AG04449 (cell line): ENCODE measurements at regions of chr2 and their contacts with region 1.

Region 1: GRCh38 chr2:75608684-75609333 is 37.8 kb upstream of the MRPL19 start:
- DNase-seq: no peak
- H3K4me3 ChIP-seq: peak overlapping the region; percentile 40
- CTCF ChIP-seq: peak; percentile 95

Region 2: DNA sequence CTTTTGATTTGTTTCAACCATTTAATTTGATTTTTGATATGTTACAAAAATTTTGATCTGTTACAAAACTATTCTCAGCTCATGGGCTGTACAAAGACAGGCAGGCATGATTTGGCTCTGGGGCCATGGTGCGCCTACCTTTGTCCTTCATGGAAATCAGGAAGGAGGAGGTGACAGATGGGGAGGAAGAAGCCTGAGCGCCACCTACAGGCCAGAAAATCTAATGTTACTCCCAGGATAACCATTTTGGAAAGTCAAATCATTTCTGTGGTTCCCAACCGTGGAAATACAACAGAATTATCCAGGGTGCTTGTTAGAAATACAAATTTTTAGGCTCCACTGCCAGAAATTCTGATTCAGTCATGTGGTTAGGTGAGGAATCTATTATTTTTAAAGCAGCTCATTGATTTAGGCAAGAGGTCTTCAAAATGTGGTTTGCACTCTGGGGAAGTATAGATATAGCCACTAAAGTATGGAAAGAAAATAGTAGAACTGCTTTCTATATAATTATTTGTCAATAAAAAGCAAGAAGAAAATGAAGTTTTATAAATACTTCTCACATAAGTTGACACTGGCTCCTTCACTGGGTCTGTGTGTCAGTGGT is 142.0 kb before region 1 on chr2:
- CTCF ChIA-PET with region 1: interaction called, 379 read pairs
- POLR2A ChIA-PET with region 1: no interaction called
- DNase-seq: no peak
- H3K4me3 ChIP-seq: no peak overlapping the region
- CTCF ChIP-seq: peak; percentile 44

Region 3: DNA sequence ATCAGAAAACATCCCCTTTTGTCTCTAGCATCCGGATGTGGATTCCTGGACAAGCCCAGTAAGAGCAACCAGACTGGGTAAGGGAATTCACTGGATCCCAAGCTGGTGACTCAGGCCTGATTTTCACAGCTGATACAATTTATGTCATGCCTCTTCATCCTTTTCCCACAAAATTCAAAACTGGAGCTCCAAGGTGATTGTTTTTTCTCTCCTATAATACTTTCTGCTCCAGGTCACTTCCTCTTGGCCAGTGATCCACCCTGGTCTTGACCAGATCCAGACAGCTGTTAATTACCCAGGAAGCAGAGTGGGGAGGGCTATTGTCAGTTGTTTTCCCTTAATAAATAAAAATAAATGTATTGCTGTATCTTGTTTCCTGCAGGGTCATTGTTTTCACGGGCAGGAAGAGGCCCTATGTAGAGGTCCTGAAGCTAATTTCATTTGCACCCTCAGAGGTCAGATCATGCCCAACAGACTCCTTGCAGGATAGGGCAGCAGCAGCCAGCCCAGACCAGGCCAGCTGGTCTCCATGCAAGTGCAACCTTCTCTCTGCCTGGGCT is 105.7 kb before region 1 on chr2:
- CTCF ChIA-PET with region 1: interaction called, 38 read pairs
- POLR2A ChIA-PET with region 1: no interaction called
- DNase-seq: peak; percentile 66
- H3K4me3 ChIP-seq: no peak overlapping the region
- CTCF ChIP-seq: no peak

Region 4: GRCh38 chr2:75548036-75548573 is 60.7 kb before region 1 on chr2:
- CTCF ChIA-PET with region 1: interaction called, 51 read pairs
- POLR2A ChIA-PET with region 1: interaction called, 5 read pairs
- DNase-seq: no peak
- H3K4me3 ChIP-seq: no peak overlapping the region
- CTCF ChIP-seq: no peak

Region 5: GRCh38 chr2:75570948-75571729 is 37.7 kb before region 1 on chr2:
- CTCF ChIA-PET with region 1: interaction called, 104 read pairs
- POLR2A ChIA-PET with region 1: interaction called, 4 read pairs
- DNase-seq: no peak
- H3K4me3 ChIP-seq: no peak overlapping the region
- CTCF ChIP-seq: no peak

Region 6: DNA sequence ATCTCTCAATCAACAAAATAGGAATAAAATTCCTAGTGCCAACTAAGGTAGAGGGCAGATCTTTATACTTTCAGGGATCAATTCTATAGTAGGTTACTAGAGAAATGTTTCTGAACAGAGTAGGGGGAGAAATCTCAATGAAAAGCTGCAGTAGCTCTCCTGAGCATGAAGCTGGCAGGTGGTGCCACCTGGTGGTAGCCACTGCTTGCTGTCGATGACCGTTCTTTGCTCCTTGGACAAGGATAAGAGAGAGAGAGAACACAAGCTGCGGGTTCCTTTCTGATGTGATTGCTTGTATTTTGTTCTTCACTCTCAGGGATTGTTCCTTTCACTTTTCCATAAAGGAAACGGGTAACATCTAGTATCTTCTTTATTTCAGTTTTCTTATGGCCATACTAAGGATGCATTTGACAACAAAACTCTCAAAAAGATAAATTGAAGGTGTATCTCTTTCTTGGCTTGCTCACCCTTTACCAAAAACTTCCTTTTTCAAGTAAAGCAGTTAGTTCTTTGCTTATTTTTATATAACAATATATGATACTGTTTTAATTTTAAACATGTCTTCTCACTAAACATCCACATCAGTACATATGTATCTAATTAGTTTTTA is 19.2 kb after region 1 on chr2:
- CTCF ChIA-PET with region 1: interaction called, 90 read pairs
- POLR2A ChIA-PET with region 1: no interaction called
- DNase-seq: no peak
- H3K4me3 ChIP-seq: no peak overlapping the region
- CTCF ChIP-seq: peak; percentile 91

Region 7: GRCh38 chr2:75764611-75765010 is 155.8 kb after region 1 on chr2:
- CTCF ChIA-PET with region 1: no interaction called
- POLR2A ChIA-PET with region 1: no interaction called
- DNase-seq: no peak
- H3K4me3 ChIP-seq: no peak overlapping the region
- CTCF ChIP-seq: no peak